ENCODE measurements at regions of chr18 and their contacts with region 1.

Region 1: GRCh38 chr18:35484034-35484433 is 13.7 kb downstream of the INO80C start:
- DNase-seq: no peak
- H3K4me3 Mint-ChIP-seq: no peak overlapping the region
- H3K27ac Mint-ChIP-seq: peak overlapping the region; percentile 16
- H3K4me1 Mint-ChIP-seq: peaks cover 16% of the 10 kb centered on the region
- H3K27me3 Mint-ChIP-seq: no peaks in the 10 kb centered on the region

Region 2: GRCh38 chr18:35415511-35416073 is 68.4 kb before region 1 on chr18:
- intact Hi-C with region 1: loop called (anchors 5 kb)
- DNase-seq: no peak
- H3K4me3 Mint-ChIP-seq: peak overlapping the region; percentile 14
- H3K27ac Mint-ChIP-seq: peak overlapping the region; percentile 6
- H3K4me1 Mint-ChIP-seq: peaks cover 22% of the 10 kb centered on the region
- H3K27me3 Mint-ChIP-seq: no peaks in the 10 kb centered on the region